ENCODE measurements at regions of chr6 and their contacts with region 1.

Region 1: DNA sequence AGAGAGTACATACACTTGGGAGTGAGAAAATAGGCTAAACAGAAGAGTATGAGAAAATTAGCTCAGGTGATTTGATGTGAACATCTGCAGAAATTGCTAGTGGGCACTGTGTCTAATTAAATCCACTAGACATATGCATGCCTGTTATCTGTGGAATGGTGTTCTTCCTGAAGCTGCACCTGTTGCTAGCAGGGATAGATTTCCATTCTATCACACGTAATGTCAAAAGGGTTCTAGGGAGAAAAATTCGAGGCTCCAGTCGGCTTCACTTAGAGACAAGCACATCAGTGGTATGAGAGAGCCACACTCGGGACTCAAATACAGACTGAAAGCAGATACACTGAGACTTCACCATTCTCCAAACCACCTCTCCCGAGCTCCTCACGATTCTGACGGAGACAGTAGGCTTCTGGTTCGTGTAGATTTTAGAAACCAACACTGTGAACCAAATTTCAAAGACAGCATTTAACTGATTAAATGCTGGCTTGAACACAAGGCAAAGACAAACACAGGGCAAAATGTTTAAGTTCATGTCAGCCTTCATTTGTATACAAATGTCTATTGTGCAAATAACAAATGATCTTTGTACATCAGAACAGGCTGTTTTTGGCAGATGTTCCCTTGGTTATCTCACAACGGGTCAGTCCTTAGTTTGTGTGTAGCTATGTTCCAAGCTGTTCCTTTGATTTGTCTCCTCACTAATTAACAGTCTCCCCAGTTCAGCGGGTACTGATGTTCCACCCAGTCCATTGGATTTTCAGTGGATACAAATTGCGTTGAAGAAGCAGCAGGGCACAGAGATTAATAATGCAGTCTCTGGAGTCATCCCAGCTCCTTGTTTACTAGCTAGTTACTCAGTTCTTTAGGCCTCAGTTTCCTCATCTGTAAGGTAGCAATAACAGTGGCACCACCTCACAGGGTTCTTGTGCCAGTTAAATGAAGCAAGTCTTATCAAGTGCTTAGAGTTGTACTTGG is 131.0 kb upstream of the IFNGR1 start:
- DNase-seq: no peak
- H3K4me3 ChIP-seq: no peak overlapping the region
- H3K27ac ChIP-seq: no peak overlapping the region
- H3K4me1 ChIP-seq: peaks cover 37% of the 10 kb centered on the region
- CTCF ChIP-seq: no peak

Region 2: DNA sequence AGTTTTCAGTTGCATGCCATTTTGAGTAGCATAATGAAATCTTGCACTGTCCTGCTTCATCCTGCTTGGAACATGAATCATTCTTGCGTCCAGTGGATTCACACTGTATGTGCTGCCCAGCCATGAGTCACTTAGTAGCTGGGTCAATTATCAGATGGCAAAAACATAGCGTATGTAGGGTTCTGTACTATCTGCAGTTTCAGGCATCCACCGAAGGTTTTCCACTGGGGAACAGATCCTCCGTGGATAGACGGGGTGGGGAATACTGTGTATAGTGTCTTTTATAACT is 238.1 kb before region 1 on chr6:
- CTCF ChIA-PET with region 1: no interaction called
- POLR2A ChIA-PET with region 1: no interaction called
- intact Hi-C with region 1: no loop called
- DNase-seq: no peak
- H3K4me3 ChIP-seq: no peak overlapping the region
- H3K27ac ChIP-seq: no peak overlapping the region
- H3K4me1 ChIP-seq: no peaks in the 10 kb centered on the region
- CTCF ChIP-seq: no peak

Region 3: GRCh38 chr6:137363805-137364138 is 13.6 kb after region 1 on chr6:
- CTCF ChIA-PET with region 1: no interaction called
- POLR2A ChIA-PET with region 1: interaction called, 10 read pairs
- intact Hi-C with region 1: no loop called
- DNase-seq: peak; percentile 12
- H3K4me3 ChIP-seq: no peak overlapping the region
- H3K27ac ChIP-seq: no peak overlapping the region
- H3K4me1 ChIP-seq: peaks cover 12% of the 10 kb centered on the region
- CTCF ChIP-seq: no peak

Region 4: DNA sequence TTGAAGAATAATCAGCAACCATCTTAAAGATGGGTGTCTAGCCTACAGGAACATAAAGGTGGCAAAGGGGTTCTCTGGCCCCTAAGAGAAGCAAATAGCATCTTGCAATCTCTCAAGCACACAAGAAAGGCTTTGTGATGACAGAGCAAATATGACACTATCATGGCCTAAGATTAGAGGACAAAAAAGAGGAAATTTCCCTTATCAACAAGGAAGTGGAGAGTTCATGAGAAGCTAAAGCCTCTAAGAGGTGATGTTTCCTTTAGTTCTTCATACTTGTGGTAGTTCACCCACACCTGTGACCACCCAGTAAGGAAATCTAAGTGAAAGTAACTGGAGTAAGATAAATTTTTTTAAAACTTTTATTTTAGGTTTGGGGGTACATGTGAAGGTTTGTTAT is 55.7 kb after region 1 on chr6:
- CTCF ChIA-PET with region 1: no interaction called
- POLR2A ChIA-PET with region 1: interaction called, 11 read pairs
- intact Hi-C with region 1: no loop called
- DNase-seq: peak; percentile 26
- H3K4me3 ChIP-seq: peak overlapping the region; percentile 9
- H3K27ac ChIP-seq: peak overlapping the region; percentile 51
- H3K4me1 ChIP-seq: peaks cover 12% of the 10 kb centered on the region
- CTCF ChIP-seq: no peak